Calu3 (cell line): ENCODE measurements at regions of chr13 and their contacts with region 1.

Region 1: GRCh38 chr13:72696579-72696978 is 30.9 kb downstream of the MZT1 start:
- DNase-seq: no peak
- H3K4me3 Mint-ChIP-seq: no peak overlapping the region
- H3K27ac Mint-ChIP-seq: no peak overlapping the region
- H3K4me1 Mint-ChIP-seq: no peaks in the 10 kb centered on the region
- H3K27me3 Mint-ChIP-seq: no peaks in the 10 kb centered on the region
- CTCF ChIP-seq: no peak

Region 2: DNA sequence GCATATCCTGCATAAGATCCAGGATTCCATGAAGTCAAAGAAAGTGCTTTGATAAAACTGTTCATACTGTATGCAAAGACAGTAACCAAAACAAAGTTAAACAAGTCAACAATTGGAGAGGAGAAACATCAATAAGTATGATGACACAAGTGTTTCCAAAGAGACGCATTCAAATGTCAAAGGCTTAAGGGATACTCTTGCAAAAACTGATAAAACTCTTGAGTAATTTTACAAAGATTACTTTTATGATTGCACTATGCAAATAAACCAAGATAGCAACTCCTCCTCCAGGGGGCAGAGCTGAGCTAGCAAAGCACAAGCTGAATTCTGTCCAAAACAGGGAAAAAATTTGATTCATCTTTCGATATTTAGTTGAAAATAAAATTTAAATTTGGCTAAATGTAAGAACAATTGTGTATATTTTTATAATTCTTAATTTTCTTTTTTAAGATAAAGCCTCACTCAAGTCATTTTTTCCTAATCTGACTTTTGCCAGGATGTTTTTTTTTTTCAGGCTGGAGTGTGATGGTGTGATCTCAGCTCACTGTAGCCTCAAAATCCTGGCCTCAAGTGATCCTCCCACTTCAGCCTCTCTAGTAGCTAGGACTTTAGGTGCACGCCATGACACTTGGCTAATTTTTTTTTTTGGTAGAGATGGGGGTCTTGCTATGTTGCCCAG is 53.1 kb before region 1 on chr13:
- CTCF ChIA-PET with region 1: no interaction called
- intact Hi-C with region 1: loop called (anchors 2 kb)
- DNase-seq: peak; percentile 35
- H3K4me3 Mint-ChIP-seq: no peak overlapping the region
- H3K27ac Mint-ChIP-seq: no peak overlapping the region
- H3K4me1 Mint-ChIP-seq: no peaks in the 10 kb centered on the region
- H3K27me3 Mint-ChIP-seq: no peaks in the 10 kb centered on the region
- CTCF ChIP-seq: no peak